ENCODE measurements at regions of chr9 and their contacts with region 1.

Region 1: DNA sequence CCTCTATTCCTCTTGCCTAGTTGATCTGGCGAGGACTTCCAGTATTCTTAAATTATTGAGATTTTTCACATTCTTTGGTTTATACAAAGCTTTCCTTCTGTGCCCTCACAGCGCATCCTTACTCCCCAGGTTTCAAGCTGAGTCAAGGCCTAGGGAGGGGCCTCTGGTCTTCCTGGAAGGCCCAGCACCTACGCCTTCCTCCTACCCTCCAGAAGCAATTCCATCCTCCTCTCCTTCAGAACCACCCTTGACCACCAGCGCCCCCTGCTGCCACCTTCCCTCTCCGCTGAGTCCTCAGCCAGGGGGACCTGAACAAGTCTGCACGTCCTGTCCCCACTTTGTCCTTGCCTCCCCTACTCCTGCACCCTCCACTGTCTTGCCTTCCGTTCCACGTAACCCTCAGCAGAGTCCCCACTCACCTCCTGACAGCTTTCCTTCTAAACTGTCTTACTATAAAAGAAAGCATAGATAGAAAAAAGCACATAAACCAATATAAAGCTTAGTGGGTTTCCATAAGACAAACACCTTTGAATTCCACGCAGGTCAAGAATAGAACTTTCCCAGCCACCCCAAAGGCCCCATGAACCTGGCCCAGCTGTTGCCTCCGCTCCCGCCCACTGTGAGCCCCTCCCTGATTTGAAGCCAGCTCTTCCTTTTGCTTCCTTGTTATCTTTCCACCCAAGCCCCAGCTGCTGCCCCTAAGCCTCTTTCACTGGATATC is 63.0 kb upstream of the CTSL start:
- DNase-seq: peak; percentile 44
- ATAC-seq: peak; percentile 91
- H3K4me3 ChIP-seq: no peak overlapping the region
- H3K27ac ChIP-seq: no peak overlapping the region
- H3K4me1 ChIP-seq: no peaks in the 10 kb centered on the region
- H3K27me3 ChIP-seq: no peaks in the 10 kb centered on the region; the same call in 1 of the 2 replicates
- CTCF ChIP-seq: peak; percentile 77
- POLR2A ChIP-seq: no peak
- RAD21 ChIP-seq: peak; percentile 85

Region 2: GRCh38 chr9:86413966-86414880 is 1248.7 kb before region 1 on chr9:
- CTCF ChIA-PET with region 1: no interaction called
- POLR2A ChIA-PET with region 1: no interaction called
- dilution Hi-C with region 1: no loop called
- in situ Hi-C with region 1: loop called (anchors 10 kb)
- intact Hi-C with region 1: loop called (anchors 2 kb)
- DNase-seq: peak; percentile 50
- ATAC-seq: peak; percentile 80
- H3K4me3 ChIP-seq: no peak overlapping the region
- H3K27ac ChIP-seq: no peak overlapping the region
- H3K4me1 ChIP-seq: peaks cover 2% of the 10 kb centered on the region
- H3K27me3 ChIP-seq: no peaks in the 10 kb centered on the region
- CTCF ChIP-seq: peak; percentile 70
- POLR2A ChIP-seq: no peak
- RAD21 ChIP-seq: peak; percentile 70

Region 3: GRCh38 chr9:87742813-87743428 is 80.0 kb after region 1 on chr9:
- CTCF ChIA-PET with region 1: no interaction called
- POLR2A ChIA-PET with region 1: no interaction called
- dilution Hi-C with region 1: no loop called
- in situ Hi-C with region 1: no loop called
- intact Hi-C with region 1: no loop called
- DNase-seq: peak; percentile 12
- ATAC-seq: no peak
- H3K4me3 ChIP-seq: no peak overlapping the region
- H3K27ac ChIP-seq: no peak overlapping the region
- H3K4me1 ChIP-seq: no peaks in the 10 kb centered on the region
- H3K27me3 ChIP-seq: peaks cover 4% of the 10 kb centered on the region
- CTCF ChIP-seq: no peak
- POLR2A ChIP-seq: no peak
- RAD21 ChIP-seq: no peak